HCT116 (cell line): ENCODE measurements at regions of chr13 and their contacts with region 1.

Region 1: DNA sequence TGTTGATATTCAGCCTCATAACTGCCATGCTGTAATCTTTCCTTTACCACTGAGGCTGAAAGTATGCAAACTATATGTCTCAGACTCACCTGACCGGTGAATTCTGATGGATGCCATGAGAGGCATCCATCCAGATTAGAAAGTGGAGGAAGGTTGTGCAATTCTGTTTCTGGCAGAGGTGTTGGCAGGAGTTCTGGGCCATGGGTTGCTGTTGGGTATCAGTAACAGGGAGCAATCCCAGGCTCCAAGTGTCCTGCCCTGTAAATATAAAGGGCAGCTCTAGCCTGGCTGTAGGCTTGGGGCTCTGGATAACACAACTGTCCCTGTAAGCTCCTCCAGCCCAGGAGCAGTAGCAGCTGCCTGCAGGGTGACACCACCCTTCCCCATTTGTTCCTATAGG is 77.4 kb upstream of the ABCC4 start:
- DNase-seq: no peak
- ATAC-seq: no peak
- H3K4me3 ChIP-seq: no peak overlapping the region
- H3K27ac ChIP-seq: no peak overlapping the region
- H3K4me1 ChIP-seq: peaks cover 9 to 12% of the 10 kb centered on the region in 2 experiments
- H3K27me3 ChIP-seq: no peaks in the 10 kb centered on the region
- CTCF ChIP-seq: no peak
- POLR2A ChIP-seq: no peak
- RAD21 ChIP-seq: no peak

Region 2: DNA sequence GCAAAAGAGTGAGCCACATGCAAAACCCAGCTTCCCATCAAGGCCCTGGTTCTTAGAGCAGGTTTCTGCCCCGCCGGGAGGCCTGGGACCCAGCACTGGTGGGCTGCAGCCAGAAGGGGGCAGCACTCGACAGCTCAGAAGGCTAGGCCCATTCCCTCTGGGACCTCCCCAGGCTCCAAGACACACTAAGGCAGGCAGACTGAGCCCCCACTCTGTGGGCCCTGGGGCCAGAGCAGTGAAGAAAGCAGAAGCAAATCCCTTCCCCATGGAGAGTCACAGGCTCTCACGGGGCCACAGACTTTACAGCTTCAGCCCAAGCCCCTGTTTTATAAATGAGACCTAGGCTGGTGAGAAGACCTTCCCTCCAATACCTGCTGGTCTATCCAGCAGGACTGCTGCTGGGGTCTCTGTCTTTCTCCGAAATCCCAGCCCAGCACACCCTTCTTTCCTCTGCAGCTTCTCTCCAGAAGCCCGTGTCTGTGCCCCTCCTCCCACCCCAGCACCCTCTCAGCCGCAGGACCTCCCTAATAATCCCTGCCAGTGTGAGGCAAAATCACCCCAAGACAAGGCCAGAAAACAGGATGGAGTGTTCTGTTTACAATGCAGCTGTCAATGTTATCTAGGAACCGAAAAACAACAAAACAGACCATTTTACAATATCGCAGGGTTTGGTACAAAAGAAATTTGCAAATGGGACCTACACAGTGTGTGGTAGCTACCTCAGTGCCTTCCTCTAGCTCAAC is 186.6 kb before region 1 on chr13:
- CTCF ChIA-PET with region 1: interaction called, 47 read pairs
- POLR2A ChIA-PET with region 1: interaction called, 4 read pairs
- RAD21 ChIA-PET with region 1: interaction called, 5 to 6 read pairs
- intact Hi-C with region 1: loop called (anchors 1 kb)
- DNase-seq: peak; percentile 45
- ATAC-seq: peak; percentile 99
- H3K4me3 ChIP-seq: no peak overlapping the region
- H3K27ac ChIP-seq: no peak overlapping the region
- H3K4me1 ChIP-seq: no peaks in the 10 kb centered on the region
- H3K27me3 ChIP-seq: no peaks in the 10 kb centered on the region
- CTCF ChIP-seq: peak; percentile 80 to 97 (median 94)
- POLR2A ChIP-seq: no peak
- RAD21 ChIP-seq: peak; percentile 91

Region 3: GRCh38 chr13:95221991-95222732 is 156.4 kb before region 1 on chr13:
- CTCF ChIA-PET with region 1: no interaction called
- POLR2A ChIA-PET with region 1: no interaction called
- RAD21 ChIA-PET with region 1: no interaction called
- intact Hi-C with region 1: no loop called
- DNase-seq: no peak
- ATAC-seq: no peak
- H3K4me3 ChIP-seq: no peak overlapping the region
- H3K27ac ChIP-seq: no peak overlapping the region
- H3K4me1 ChIP-seq: peaks cover 0 to 4% of the 10 kb centered on the region in 2 experiments; a peak in 1 of 4 replicates
- H3K27me3 ChIP-seq: no peaks in the 10 kb centered on the region
- CTCF ChIP-seq: no peak
- POLR2A ChIP-seq: no peak
- RAD21 ChIP-seq: no peak

Region 4: GRCh38 chr13:97235549-97236231 is 1857.1 kb after region 1 on chr13:
- CTCF ChIA-PET with region 1: no interaction called
- POLR2A ChIA-PET with region 1: no interaction called
- RAD21 ChIA-PET with region 1: no interaction called
- intact Hi-C with region 1: no loop called
- DNase-seq: no peak
- ATAC-seq: no peak
- H3K4me3 ChIP-seq: no peak overlapping the region
- H3K27ac ChIP-seq: no peak overlapping the region
- H3K4me1 ChIP-seq: peaks cover 14 to 40% of the 10 kb centered on the region in 2 experiments; a peak in 3 of 4 replicates
- H3K27me3 ChIP-seq: no peaks in the 10 kb centered on the region
- CTCF ChIP-seq: no peak
- POLR2A ChIP-seq: no peak
- RAD21 ChIP-seq: no peak